CD8-positive, alpha-beta T cell (primary cell): ENCODE measurements at regions of chrX and their contacts with region 1.

Region 1: GRCh38 chrX:150693775-150694574 is 779 bp downstream of the MTMR1 start:
- DNase-seq: peak; percentile 22 to 82 (median 66)
- ATAC-seq: peak; percentile 35
- H3K4me3 ChIP-seq: peak overlapping the region; percentile 54 to 82
- H3K4me3 Mint-ChIP-seq: peak overlapping the region; percentile 96
- H3K27ac ChIP-seq: peak overlapping the region; percentile 82 to 85
- H3K27ac Mint-ChIP-seq: peak overlapping the region; percentile 98
- H3K4me1 ChIP-seq: peaks cover 54% of the 10 kb centered on the region
- H3K4me1 Mint-ChIP-seq: peaks cover 68% of the 10 kb centered on the region
- H3K27me3 ChIP-seq: no peaks in the 10 kb centered on the region
- H3K27me3 Mint-ChIP-seq: no peaks in the 10 kb centered on the region
- CTCF ChIP-seq: no peak

Region 2: DNA sequence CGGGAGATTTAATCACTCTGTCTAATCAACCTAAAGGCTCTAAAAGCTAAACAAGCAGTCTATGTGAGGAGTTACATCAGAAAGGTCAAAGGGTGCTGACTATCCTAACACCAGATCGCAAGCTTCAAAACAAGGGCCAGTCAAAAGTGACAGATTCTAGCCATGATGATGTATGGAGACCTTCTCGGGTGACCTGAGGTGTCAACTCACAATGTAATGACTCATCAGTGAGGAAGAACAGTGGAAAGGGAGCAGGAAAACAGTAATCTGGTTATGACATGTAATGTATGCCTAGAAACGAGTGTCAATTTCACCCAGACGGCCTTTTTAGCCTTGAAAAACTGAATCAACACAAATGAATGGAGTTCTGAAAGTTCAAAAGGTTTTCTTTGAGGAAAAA is 1564.2 kb before region 1 on chrX:
- CTCF ChIA-PET with region 1: no interaction called
- POLR2A ChIA-PET with region 1: no interaction called
- intact Hi-C with region 1: no loop called
- DNase-seq: no peak
- ATAC-seq: no peak
- H3K4me3 ChIP-seq: no peak overlapping the region
- H3K4me3 Mint-ChIP-seq: no peak overlapping the region
- H3K27ac ChIP-seq: no peak overlapping the region
- H3K27ac Mint-ChIP-seq: no peak overlapping the region
- H3K4me1 ChIP-seq: no peaks in the 10 kb centered on the region
- H3K4me1 Mint-ChIP-seq: no peaks in the 10 kb centered on the region
- H3K27me3 ChIP-seq: no peaks in the 10 kb centered on the region
- H3K27me3 Mint-ChIP-seq: no peaks in the 10 kb centered on the region
- CTCF ChIP-seq: no peak

Region 3: GRCh38 chrX:149938427-149939270 is 755.3 kb before region 1 on chrX and contains the start of gene EOLA2:
- CTCF ChIA-PET with region 1: no interaction called
- POLR2A ChIA-PET with region 1: interaction called, 12 read pairs
- intact Hi-C with region 1: loop called in 1 of 2 experiments (anchors 5 kb)
- DNase-seq: peak; percentile 83 to 98 (median 91)
- ATAC-seq: peak; percentile 52
- H3K4me3 ChIP-seq: peak within 1 kb of the TSS; percentile 69 to 89
- H3K4me3 Mint-ChIP-seq: peak within 1 kb of the TSS; percentile 94
- H3K27ac ChIP-seq: peak within 1 kb of the TSS; percentile 92 to 99
- H3K27ac Mint-ChIP-seq: peak within 1 kb of the TSS; percentile 98
- H3K4me1 ChIP-seq: peaks cover 7% of the 10 kb centered on the region
- H3K4me1 Mint-ChIP-seq: peaks cover 3% of the 10 kb centered on the region
- H3K27me3 ChIP-seq: no peaks in the 10 kb centered on the region
- H3K27me3 Mint-ChIP-seq: no peaks in the 10 kb centered on the region
- CTCF ChIP-seq: no peak
- total RNA-seq, gene EOLA2: 43.7 to 44.4 TPM

Region 4: GRCh38 chrX:150568320-150569154 is 125.4 kb before region 1 on chrX and contains the start of gene MTM1:
- CTCF ChIA-PET with region 1: no interaction called
- POLR2A ChIA-PET with region 1: interaction called, 6 read pairs
- intact Hi-C with region 1: loop called (anchors 2 to 5 kb)
- DNase-seq: peak; percentile 82 to 95 (median 88)
- ATAC-seq: peak; percentile 91
- H3K4me3 ChIP-seq: peak within 1 kb of the TSS; percentile 58 to 71
- H3K4me3 Mint-ChIP-seq: peak within 1 kb of the TSS; percentile 88
- H3K27ac ChIP-seq: peak within 1 kb of the TSS; percentile 31 to 79
- H3K27ac Mint-ChIP-seq: peak within 1 kb of the TSS; percentile 86
- H3K4me1 ChIP-seq: peaks cover 38% of the 10 kb centered on the region
- H3K4me1 Mint-ChIP-seq: peaks cover 39% of the 10 kb centered on the region
- H3K27me3 ChIP-seq: no peaks in the 10 kb centered on the region
- H3K27me3 Mint-ChIP-seq: no peaks in the 10 kb centered on the region
- CTCF ChIP-seq: no peak
- total RNA-seq, gene MTM1: 16.0 to 18.8 TPM

Region 5: GRCh38 chrX:150683536-150684146 is 10.3 kb before region 1 on chrX:
- CTCF ChIA-PET with region 1: interaction called, 33 read pairs
- POLR2A ChIA-PET with region 1: interaction called, 6 read pairs
- intact Hi-C with region 1: loop called in 1 of 2 experiments (anchors 1 kb)
- DNase-seq: peak in 4 of 9 experiments; percentile 23 to 74 (median 48)
- ATAC-seq: peak; percentile 62
- H3K4me3 ChIP-seq: no peak overlapping the region
- H3K4me3 Mint-ChIP-seq: no peak overlapping the region
- H3K27ac ChIP-seq: no peak overlapping the region
- H3K27ac Mint-ChIP-seq: no peak overlapping the region
- H3K4me1 ChIP-seq: peaks cover 10% of the 10 kb centered on the region
- H3K4me1 Mint-ChIP-seq: peaks cover 10% of the 10 kb centered on the region
- H3K27me3 ChIP-seq: no peaks in the 10 kb centered on the region
- H3K27me3 Mint-ChIP-seq: no peaks in the 10 kb centered on the region
- CTCF ChIP-seq: peak; percentile 59

Region 6: DNA sequence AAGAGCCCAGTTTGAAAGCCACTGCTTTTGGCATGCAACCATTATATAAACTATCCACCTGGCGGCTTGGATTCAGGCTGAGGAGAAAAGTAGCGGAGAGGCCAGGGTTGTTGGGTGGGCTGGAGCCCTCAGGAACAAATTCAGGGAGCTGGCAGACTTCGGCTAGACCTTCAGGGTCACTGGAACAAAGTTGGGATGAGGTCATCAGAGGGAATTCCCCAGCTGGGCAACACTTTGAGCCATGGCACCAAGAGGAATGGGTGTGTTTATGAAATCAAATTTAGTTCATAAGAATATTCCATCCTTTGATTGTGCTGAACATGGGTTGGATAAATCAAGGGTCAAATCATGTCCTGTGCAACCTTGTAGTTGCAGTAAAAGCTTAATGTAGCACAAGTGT is 21.2 kb after region 1 on chrX:
- CTCF ChIA-PET with region 1: interaction called, 8 read pairs
- POLR2A ChIA-PET with region 1: interaction called, 14 read pairs
- intact Hi-C with region 1: loop called in 1 of 2 experiments (anchors 2 kb)
- DNase-seq: no peak
- ATAC-seq: no peak
- H3K4me3 ChIP-seq: no peak overlapping the region
- H3K4me3 Mint-ChIP-seq: no peak overlapping the region
- H3K27ac ChIP-seq: no peak overlapping the region
- H3K27ac Mint-ChIP-seq: peak overlapping the region; percentile 49
- H3K4me1 ChIP-seq: no peaks in the 10 kb centered on the region
- H3K4me1 Mint-ChIP-seq: peaks cover 50% of the 10 kb centered on the region
- H3K27me3 ChIP-seq: no peaks in the 10 kb centered on the region
- H3K27me3 Mint-ChIP-seq: no peaks in the 10 kb centered on the region
- CTCF ChIP-seq: no peak

Region 7: GRCh38 chrX:150731795-150732194 is 37.8 kb after region 1 on chrX:
- CTCF ChIA-PET with region 1: no interaction called
- POLR2A ChIA-PET with region 1: no interaction called
- intact Hi-C with region 1: no loop called
- DNase-seq: no peak
- ATAC-seq: no peak
- H3K4me3 ChIP-seq: no peak overlapping the region
- H3K4me3 Mint-ChIP-seq: no peak overlapping the region
- H3K27ac ChIP-seq: no peak overlapping the region
- H3K27ac Mint-ChIP-seq: no peak overlapping the region
- H3K4me1 ChIP-seq: no peaks in the 10 kb centered on the region
- H3K4me1 Mint-ChIP-seq: peaks cover 17% of the 10 kb centered on the region
- H3K27me3 ChIP-seq: no peaks in the 10 kb centered on the region
- H3K27me3 Mint-ChIP-seq: no peaks in the 10 kb centered on the region
- CTCF ChIP-seq: no peak

Region 8: DNA sequence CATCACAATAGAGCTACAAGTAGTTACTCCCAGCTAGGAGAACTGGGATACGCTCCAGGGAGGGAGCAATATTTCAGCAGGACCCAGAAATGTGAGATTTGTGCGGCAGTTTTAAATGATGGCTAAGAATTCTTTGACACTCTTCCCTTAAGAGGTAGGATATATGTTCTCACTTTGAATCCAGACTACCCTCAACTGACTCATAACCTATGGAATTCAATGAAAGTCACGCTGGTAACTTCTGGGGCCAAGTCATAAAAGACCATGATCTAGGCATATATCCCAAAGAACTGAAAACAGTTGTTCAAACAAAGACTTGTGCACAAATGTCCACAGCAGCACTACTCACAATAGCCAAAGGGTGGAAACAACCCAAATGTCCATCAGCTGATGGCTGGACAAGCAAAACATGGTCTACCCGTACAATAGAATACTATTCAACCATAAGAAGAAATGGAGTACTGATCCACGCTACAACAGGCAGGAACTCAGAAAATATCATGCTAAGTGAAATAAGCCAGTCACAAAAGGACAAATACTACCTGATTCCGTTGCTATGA is 194.0 kb after region 1 on chrX:
- CTCF ChIA-PET with region 1: no interaction called
- POLR2A ChIA-PET with region 1: no interaction called
- intact Hi-C with region 1: no loop called
- DNase-seq: no peak
- ATAC-seq: no peak
- H3K4me3 ChIP-seq: no peak overlapping the region
- H3K4me3 Mint-ChIP-seq: no peak overlapping the region
- H3K27ac ChIP-seq: no peak overlapping the region
- H3K27ac Mint-ChIP-seq: no peak overlapping the region
- H3K4me1 ChIP-seq: no peaks in the 10 kb centered on the region
- H3K4me1 Mint-ChIP-seq: no peaks in the 10 kb centered on the region
- H3K27me3 ChIP-seq: no peaks in the 10 kb centered on the region
- H3K27me3 Mint-ChIP-seq: no peaks in the 10 kb centered on the region
- CTCF ChIP-seq: no peak

Region 9: GRCh38 chrX:151396825-151397740 is 703.1 kb after region 1 on chrX and contains the start of gene VMA21:
- CTCF ChIA-PET with region 1: no interaction called
- POLR2A ChIA-PET with region 1: no interaction called
- intact Hi-C with region 1: loop called (anchors 10 kb)
- DNase-seq: peak; percentile 54 to 90 (median 77)
- ATAC-seq: peak; percentile 74
- H3K4me3 ChIP-seq: peak within 1 kb of the TSS; percentile 70 to 82
- H3K4me3 Mint-ChIP-seq: peak within 1 kb of the TSS; percentile 88
- H3K27ac ChIP-seq: peak within 1 kb of the TSS; percentile 89 to 96
- H3K27ac Mint-ChIP-seq: peak within 1 kb of the TSS; percentile 98
- H3K4me1 ChIP-seq: peaks cover 57% of the 10 kb centered on the region
- H3K4me1 Mint-ChIP-seq: peaks cover 68% of the 10 kb centered on the region
- H3K27me3 ChIP-seq: no peaks in the 10 kb centered on the region
- H3K27me3 Mint-ChIP-seq: no peaks in the 10 kb centered on the region
- CTCF ChIP-seq: no peak
- total RNA-seq, gene VMA21: 17.9 to 19.3 TPM

Region 10: GRCh38 chrX:151806967-151807540 is 1113.1 kb after region 1 on chrX:
- CTCF ChIA-PET with region 1: no interaction called
- POLR2A ChIA-PET with region 1: no interaction called
- intact Hi-C with region 1: no loop called
- DNase-seq: no peak
- ATAC-seq: no peak
- H3K4me3 ChIP-seq: no peak overlapping the region
- H3K4me3 Mint-ChIP-seq: no peak overlapping the region
- H3K27ac ChIP-seq: no peak overlapping the region
- H3K27ac Mint-ChIP-seq: no peak overlapping the region
- H3K4me1 ChIP-seq: no peaks in the 10 kb centered on the region
- H3K4me1 Mint-ChIP-seq: no peaks in the 10 kb centered on the region
- H3K27me3 ChIP-seq: no peaks in the 10 kb centered on the region
- H3K27me3 Mint-ChIP-seq: peaks cover 5% of the 10 kb centered on the region
- CTCF ChIP-seq: no peak